ENCODE measurements at regions of chr4 and their contacts with region 1.

Region 1: DNA sequence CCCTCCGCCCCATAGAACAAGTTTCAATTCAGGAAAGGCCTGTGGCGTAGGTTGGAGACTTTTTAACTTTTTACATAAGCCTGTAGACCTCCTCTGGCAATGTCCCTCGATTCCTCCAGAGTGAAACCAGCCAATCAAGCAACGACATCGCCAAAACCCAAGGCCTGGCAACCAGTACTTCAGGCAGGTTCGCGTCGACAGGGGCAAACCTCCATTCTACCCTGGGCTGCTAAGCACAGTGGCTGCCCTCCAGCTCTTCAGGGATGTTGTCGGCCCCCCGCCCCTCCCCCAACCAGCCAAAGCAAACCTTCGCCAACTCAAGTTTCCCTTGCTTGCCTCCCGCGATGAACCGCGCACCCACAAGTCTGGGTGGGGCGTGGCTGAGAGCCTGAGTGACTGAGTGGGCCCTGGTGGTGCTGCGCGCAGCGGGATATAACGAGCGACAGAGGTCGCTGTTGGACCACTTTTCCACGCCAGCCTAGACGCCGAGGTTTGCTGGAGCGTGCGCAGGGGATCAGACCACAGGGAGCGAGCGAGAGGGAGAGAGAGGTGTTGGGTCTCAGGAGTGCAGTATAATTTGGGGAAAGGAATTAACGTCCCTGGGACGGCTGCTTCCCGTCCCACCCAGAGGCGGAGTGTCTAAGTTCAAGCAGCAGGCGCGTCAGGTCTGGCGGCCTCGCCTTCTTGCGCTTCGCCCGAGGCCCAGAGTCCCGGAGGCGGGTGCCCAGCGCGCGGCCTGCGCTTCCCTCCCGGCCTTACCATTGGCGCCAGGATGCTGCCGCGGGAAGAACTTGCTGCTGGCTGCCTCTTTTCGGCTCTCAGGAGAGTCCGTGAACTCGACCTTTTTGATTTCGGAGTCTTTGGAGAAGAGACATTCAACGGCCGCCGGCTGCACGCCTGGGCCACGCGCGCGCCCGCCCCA is 9.0 kb upstream of the PITX2 start:
- DNase-seq: peak in 4 of 5 donors; percentile 39 to 57 (median 55)
- ATAC-seq: peak; percentile 83 to 97 (median 94)
- H3K4me3 ChIP-seq: peak overlapping the region in 11 of 12 donors; percentile 5 to 39 (median 19)
- H3K27ac ChIP-seq: no peak overlapping the region
- H3K4me1 ChIP-seq: peaks cover 0 to 31% (median 17%) of the 10 kb centered on the region in 12 donors
- H3K27me3 ChIP-seq: peaks cover 76 to 100% (median 100%) of the 10 kb centered on the region in 9 donors
- CTCF ChIP-seq: peak; percentile 35 to 68 (median 57)
- POLR2A ChIP-seq: no peak

Region 2: GRCh38 chr4:110959041-110959643 is 327.3 kb after region 1 on chr4:
- intact Hi-C with region 1: loop called in 4 of 10 experiments (anchors 5 to 10 kb)
- DNase-seq: no peak
- ATAC-seq: no peak
- H3K4me3 ChIP-seq: no peak overlapping the region
- H3K27ac ChIP-seq: no peak overlapping the region
- H3K4me1 ChIP-seq: no peaks in the 10 kb centered on the region
- H3K27me3 ChIP-seq: peaks cover 0 to 12% (median 0%) of the 10 kb centered on the region in 9 donors
- CTCF ChIP-seq: peak in 4 of 12 donors; percentile 12 to 23 (median 16)
- POLR2A ChIP-seq: no peak

Region 3: DNA sequence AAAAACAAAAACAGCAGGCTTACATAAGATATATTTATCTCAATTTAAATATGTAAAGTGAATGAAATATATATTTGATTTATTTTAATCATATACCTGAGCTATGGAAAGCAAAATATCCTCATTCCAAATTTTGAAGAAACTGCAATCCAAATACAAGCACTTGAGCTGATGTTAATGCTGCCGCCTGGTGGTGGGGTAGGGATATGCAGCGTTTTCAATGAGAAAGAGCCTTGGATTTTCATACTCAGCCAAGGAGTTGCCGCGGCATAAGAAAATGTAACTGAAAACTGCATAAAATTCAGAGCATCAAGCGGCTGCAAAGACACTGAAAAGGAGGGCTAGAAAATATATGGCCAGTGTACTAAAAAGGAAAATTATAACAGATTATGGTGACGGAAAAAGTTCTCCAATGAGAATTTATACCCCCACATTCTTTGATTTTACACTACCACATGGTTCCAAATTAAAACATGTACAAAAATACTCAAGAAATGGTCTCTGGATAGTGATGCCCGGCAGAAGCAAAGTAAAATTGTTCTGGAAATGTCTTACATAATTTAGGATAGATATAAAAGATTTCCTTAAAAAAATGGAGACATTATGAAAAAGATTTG is 651.3 kb after region 1 on chr4:
- intact Hi-C with region 1: loop called in 9 of 10 experiments (anchors 5 to 10 kb)
- DNase-seq: peak in 4 of 5 donors; percentile 23 to 56 (median 27)
- ATAC-seq: no peak
- H3K4me3 ChIP-seq: no peak overlapping the region
- H3K27ac ChIP-seq: no peak overlapping the region
- H3K4me1 ChIP-seq: no peaks in the 10 kb centered on the region
- H3K27me3 ChIP-seq: peaks cover 0 to 6% (median 0%) of the 10 kb centered on the region in 9 donors
- CTCF ChIP-seq: peak; percentile 55 to 75 (median 65)
- POLR2A ChIP-seq: no peak

Region 4: DNA sequence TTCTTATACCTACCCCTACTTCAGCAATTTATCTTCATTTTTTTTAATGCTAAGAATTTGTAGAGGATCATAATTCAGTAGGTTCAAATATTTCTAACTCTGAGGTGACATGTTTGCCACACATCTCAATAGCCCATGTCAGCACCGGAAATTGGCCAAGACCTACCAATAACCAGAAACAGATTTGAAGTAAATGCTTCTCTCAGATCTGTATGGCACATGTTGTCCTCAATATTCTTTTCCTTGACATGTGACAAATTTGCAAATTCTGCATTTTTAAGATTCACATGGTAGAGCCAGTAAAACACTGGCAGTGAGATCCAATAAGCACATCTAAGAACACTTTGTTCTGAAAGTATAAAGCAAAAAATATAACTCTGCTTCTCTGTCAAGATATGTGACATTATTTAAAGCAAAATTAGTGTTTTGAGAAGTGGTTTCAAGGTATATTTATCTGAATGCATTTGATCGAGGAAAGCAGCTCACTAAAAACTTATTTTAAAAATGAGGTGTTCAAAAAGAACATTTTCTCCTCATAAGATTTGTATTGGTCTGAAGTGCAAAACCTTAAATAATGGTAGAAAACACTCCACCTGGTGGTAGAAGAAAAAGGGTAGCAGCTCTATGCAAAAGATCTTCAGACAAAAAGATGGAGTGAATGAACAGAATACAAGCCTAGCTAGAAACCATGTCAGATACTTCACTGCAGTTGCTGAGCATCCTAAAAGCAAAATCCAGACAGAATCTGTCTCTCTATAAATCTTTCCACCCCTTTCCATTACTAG is 999.6 kb after region 1 on chr4:
- intact Hi-C with region 1: loop called in 9 of 10 experiments (anchors 5 to 10 kb)
- DNase-seq: no peak
- ATAC-seq: no peak
- H3K4me3 ChIP-seq: no peak overlapping the region
- H3K27ac ChIP-seq: no peak overlapping the region
- H3K4me1 ChIP-seq: no peaks in the 10 kb centered on the region
- H3K27me3 ChIP-seq: peaks cover 0 to 26% (median 0%) of the 10 kb centered on the region in 9 donors
- CTCF ChIP-seq: peak in 7 of 12 donors; percentile 6 to 36 (median 23)
- POLR2A ChIP-seq: no peak